ENCODE measurements at regions of chr6 and their contacts with region 1.

Region 1: GRCh38 chr6:96626759-96627364 is 63.9 kb downstream of the FHL5 start:
- DNase-seq: no peak
- H3K4me3 ChIP-seq: no peak overlapping the region
- H3K27ac ChIP-seq: no peak overlapping the region
- H3K4me1 ChIP-seq: no peaks in the 10 kb centered on the region
- H3K27me3 ChIP-seq: no peaks in the 10 kb centered on the region
- CTCF ChIP-seq: peak in 2 of 3 experiments; percentile 26 to 49

Region 2: DNA sequence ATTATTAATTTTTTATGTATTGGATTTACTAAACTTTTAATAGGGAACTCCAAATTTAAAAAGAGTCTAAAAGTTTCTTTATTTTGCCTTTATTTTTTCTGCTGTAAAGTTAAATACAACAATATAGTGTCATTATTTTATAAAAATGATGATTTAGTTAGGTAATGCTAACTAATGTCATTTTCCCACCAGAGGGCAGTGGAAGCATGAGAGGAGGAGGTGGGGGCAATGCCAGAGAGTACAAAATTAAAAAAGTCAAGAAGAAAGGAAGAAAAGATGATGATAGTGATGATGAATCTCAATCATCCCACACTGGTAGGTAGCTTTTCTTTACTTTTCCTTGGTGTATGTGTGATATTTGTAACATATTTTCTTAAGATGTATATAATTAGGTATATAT is 84.2 kb before region 1 on chr6:
- intact Hi-C with region 1: loop called (anchors 5 kb)
- DNase-seq: no peak
- H3K4me3 ChIP-seq: no peak overlapping the region
- H3K27ac ChIP-seq: no peak overlapping the region
- H3K4me1 ChIP-seq: no peaks in the 10 kb centered on the region
- H3K27me3 ChIP-seq: no peaks in the 10 kb centered on the region
- CTCF ChIP-seq: peak; percentile 30 to 63 (median 40)

Region 3: DNA sequence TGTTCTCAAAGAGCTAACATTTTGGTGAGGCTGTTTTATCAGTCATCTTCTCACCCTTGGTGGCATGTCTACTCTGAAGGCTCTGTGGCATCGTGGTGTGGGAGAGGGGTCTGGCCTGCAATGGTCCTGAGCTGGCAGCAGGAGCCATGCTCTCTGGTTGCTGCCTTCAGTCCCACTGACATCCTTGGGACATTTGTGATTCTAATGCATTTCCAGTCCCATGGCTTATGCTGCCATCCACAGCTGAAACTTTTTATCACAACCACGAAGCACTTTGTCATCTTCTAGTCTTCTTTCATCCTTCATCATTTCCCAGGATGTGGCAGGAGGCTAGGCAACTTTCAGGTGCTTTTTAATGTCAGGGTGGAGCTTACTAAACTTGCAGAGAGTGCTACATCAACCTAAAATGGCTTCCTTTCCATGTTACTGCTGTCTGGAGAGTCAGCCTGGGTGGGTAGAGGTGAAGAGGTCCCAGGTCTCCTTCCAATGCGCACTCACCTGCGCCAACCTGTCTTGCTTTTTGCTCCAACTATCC is 133.4 kb after region 1 on chr6:
- intact Hi-C with region 1: loop called (anchors 5 kb)
- DNase-seq: no peak
- H3K4me3 ChIP-seq: no peak overlapping the region
- H3K27ac ChIP-seq: no peak overlapping the region
- H3K4me1 ChIP-seq: no peaks in the 10 kb centered on the region
- H3K27me3 ChIP-seq: no peaks in the 10 kb centered on the region
- CTCF ChIP-seq: peak in 1 of 3 experiments; percentile 24

Region 4: DNA sequence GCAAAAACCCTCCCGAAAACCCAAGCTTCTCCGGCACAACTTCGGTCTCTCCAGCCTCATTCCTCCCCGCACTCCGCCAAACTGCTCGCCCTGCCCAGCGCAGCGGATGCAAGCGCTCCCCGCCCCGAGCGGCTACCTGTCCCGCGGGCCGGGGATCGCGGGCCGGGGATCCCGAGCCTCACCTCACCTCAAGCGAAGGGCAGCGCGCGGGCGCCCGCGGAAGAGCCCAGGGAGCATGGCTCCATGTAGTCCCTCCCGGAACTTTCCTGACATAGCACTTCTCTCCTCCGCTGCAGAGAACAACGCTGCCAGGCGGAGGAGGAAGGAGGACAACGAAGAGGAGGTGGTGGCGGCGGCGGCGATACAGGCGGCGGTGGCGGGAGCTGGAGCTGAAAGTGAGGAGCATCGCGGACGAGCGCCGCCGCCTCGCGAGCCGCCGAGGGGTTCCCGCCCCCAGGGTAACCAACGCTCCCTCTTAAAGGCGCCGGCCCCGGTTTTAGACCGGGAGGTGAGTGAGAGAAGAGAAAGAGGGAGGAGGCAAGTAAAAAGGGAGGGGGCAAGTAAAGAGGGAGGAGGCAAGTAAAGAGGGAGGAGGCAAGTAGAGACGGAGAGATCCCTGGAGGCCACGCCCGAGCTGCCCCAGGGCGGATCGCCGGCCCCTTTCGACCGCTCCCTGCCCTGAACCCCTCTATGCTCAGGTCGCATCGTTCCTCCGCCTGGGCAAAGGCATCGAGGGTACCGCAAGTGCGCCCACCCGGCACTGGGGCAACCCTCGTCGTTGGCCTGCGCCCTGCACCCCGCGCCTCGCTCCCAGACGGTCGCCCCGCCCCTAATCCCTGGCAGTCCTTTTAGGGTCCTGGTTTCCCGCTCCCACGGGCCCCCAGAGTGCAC is 210.5 kb after region 1 on chr6 and contains the start of gene GPR63:
- intact Hi-C with region 1: loop called (anchors 10 kb)
- DNase-seq: peak in 1 of 2 donors; percentile 83
- H3K4me3 ChIP-seq: peak within 1 kb of the TSS; percentile 71 to 76
- H3K27ac ChIP-seq: peak within 1 kb of the TSS; percentile 31 to 54
- H3K4me1 ChIP-seq: peaks cover 0 to 4% of the 10 kb centered on the region in 2 donors
- H3K27me3 ChIP-seq: no peaks in the 10 kb centered on the region
- CTCF ChIP-seq: peak in 1 of 3 experiments; percentile 3
- total RNA-seq, gene GPR63: 0.85 TPM

Region 5: DNA sequence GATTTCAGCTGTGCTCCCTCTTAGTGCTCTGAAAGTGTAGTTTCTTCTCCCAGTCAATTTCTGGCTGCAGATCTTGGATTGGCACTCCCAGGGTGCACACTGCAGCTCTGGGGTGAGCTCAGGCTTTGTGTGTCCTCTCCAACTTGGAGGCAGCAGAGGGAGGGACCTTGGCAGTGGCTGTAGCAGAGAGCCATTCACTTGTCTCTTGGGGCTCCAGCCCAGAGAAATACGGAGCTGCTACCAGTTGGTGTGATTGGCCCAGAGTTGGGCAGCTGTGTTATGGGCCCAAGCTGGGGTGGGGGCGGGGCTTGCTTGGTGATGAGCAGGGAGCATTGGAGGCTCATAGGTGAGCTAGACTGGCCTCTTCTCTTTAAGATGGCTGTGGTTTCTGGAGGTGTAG is 363.6 kb after region 1 on chr6:
- intact Hi-C with region 1: no loop called
- DNase-seq: no peak
- H3K4me3 ChIP-seq: no peak overlapping the region
- H3K27ac ChIP-seq: no peak overlapping the region
- H3K4me1 ChIP-seq: no peaks in the 10 kb centered on the region
- H3K27me3 ChIP-seq: no peaks in the 10 kb centered on the region
- CTCF ChIP-seq: no peak

Region 6: DNA sequence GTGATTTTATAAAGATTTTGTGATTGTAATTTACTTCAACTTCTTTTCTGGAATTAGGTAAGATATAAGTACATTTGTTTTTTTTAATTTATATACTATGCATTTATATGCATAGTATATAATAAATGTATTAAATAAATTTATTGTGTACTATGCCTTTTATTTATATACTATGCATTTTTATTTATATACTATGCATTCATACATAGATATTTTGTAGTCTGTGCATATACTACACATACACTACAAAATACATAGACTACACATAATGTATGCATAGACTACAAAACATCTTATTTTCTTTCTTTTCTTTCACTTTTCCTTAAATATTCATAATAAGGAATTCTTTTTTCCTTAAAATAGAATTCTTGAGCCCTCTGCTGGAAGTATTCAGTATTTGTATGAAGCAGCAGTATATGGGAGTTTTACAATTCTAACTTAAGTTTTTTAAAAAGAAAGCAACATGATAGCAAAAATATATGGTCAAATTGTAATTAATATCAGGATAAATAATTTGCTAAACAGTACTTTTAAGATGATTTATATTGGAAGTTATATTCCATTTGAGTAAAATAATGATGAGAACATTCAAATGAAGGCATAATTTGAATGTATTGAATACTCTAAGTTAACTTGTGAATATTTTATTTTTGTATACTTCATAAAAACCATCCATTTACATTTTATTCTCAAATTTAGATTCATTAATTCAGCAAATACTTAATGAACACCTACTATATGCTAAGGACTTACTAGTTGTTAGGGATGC is 427.0 kb after region 1 on chr6:
- intact Hi-C with region 1: loop called (anchors 5 kb)
- DNase-seq: no peak
- H3K4me3 ChIP-seq: no peak overlapping the region
- H3K27ac ChIP-seq: no peak overlapping the region
- H3K4me1 ChIP-seq: no peaks in the 10 kb centered on the region
- H3K27me3 ChIP-seq: no peaks in the 10 kb centered on the region
- CTCF ChIP-seq: peak in 2 of 3 experiments; percentile 50 to 59

Region 7: DNA sequence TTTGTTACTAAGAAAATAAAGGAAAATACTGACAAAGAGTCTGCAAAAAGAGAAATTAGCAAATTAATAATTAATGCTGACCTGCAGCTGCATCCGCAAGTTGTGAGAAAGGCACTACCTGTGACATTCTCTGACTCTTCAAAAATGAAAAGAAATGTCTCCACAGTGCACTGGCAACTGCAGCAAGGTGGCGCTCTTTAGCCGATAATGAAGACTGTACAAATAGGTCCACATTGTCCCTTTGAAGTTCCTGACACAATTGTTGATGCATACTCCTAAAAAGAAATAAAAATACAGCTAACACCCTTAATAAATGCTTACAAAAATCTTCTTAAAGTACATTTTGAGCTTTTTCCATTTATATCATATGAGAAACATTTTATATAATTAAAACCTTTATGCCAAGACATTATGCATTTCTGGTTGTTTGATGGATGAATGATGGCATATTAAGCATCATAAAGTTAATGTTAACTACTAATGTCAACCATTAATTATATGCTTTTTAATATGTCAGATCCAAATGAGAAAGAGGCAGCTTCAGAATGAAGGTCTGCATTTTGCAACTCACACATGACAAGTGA is 559.6 kb after region 1 on chr6:
- intact Hi-C with region 1: no loop called
- DNase-seq: peak in 1 of 2 donors; percentile 62
- H3K4me3 ChIP-seq: no peak overlapping the region
- H3K27ac ChIP-seq: no peak overlapping the region
- H3K4me1 ChIP-seq: no peaks in the 10 kb centered on the region
- H3K27me3 ChIP-seq: no peaks in the 10 kb centered on the region
- CTCF ChIP-seq: peak in 2 of 3 experiments; percentile 59 to 72